ENCODE measurements at regions of chr20 and their contacts with region 1.

Region 1: DNA sequence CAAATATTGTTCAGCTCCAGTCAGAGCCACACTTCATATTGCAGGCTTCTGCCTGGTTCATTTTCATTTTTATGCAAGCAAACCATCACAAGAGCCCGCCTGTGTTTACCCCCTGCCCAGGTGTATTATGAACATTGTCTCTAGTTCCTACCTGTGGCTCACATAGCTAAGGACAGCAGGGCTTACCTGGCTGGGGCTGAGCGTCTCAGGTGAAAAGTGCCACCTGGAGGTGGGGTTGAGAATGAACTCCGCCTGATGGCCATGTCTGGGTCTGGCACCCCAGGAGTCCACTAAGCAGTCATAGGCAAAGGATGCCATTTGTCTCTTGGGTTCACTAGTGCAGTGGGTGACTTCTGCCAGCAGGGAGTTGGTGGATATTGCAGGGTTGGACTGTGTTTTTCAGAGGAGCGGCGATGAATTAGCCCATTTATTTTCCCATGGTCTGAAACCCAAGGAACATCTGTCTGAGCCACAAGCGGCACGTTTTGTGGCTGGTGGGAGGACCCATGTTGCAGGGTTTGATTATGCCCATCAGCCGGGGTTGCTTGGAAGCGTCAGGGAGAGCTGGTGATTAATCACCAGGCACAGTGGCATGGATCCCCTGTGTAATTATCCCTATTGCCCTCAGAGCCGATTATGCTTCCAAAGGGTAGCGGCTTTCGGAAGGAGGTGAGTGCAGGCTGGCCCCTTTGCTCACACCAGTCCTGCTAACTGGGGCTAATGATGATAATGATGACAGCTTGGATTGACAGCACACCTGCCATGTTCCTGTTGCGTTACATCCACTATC is 92.1 kb downstream of the CDH26 start:
- DNase-seq: peak; percentile 56
- H3K4me3 ChIP-seq: no peak overlapping the region
- H3K27ac ChIP-seq: no peak overlapping the region
- H3K4me1 ChIP-seq: peaks cover 27% of the 10 kb centered on the region
- H3K27me3 ChIP-seq: no peaks in the 10 kb centered on the region
- CTCF ChIP-seq: peak; percentile 64 to 75

Region 2: GRCh38 chr20:59948828-59949720 is 101.3 kb before region 1 on chr20:
- CTCF ChIA-PET with region 1: interaction called, 8 read pairs
- dilution Hi-C with region 1: no loop called
- in situ Hi-C with region 1: no loop called
- intact Hi-C with region 1: loop called (anchors 1 kb)
- DNase-seq: peak; percentile 37
- H3K4me3 ChIP-seq: no peak overlapping the region
- H3K27ac ChIP-seq: no peak overlapping the region
- H3K4me1 ChIP-seq: peaks cover 5% of the 10 kb centered on the region
- H3K27me3 ChIP-seq: no peaks in the 10 kb centered on the region
- CTCF ChIP-seq: peak; percentile 65 to 70

Region 3: DNA sequence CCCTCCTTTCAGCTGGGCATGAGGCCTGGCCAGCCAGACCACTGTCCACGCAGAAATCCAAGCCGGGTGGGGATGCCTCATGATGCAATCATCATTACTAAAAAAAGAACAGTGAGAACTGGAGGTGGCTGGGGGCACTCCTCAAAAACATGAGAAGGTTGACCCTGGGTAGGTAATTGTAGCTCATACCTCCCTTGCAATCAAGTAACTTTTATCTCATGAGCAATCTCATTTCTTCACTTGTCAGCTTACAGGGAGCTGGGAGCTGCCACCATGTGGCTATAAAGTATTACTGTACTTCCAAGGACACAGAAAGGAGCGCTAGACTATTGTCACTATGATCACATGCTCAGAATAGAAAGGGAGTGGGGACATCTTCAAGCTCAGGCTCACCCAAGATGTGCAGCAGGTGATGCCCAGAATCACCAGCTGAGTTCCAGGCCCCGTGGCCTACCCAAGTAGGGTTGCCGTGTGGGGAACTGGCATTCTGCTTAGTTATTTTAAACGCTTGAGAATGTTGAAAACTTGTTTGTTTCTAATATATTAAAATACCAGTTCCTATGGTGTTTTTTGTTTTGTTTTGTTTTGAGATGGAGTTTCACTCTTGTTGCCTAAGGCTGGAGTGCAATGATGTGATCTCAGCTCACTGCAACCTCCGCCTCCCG is 95.1 kb before region 1 on chr20:
- CTCF ChIA-PET with region 1: no interaction called
- dilution Hi-C with region 1: no loop called
- in situ Hi-C with region 1: loop called in 1 of 2 experiments (anchors 5 kb)
- intact Hi-C with region 1: no loop called
- DNase-seq: no peak
- H3K4me3 ChIP-seq: no peak overlapping the region
- H3K27ac ChIP-seq: no peak overlapping the region
- H3K4me1 ChIP-seq: peaks cover 4% of the 10 kb centered on the region
- H3K27me3 ChIP-seq: no peaks in the 10 kb centered on the region
- CTCF ChIP-seq: peak; percentile 30 to 42

Region 4: DNA sequence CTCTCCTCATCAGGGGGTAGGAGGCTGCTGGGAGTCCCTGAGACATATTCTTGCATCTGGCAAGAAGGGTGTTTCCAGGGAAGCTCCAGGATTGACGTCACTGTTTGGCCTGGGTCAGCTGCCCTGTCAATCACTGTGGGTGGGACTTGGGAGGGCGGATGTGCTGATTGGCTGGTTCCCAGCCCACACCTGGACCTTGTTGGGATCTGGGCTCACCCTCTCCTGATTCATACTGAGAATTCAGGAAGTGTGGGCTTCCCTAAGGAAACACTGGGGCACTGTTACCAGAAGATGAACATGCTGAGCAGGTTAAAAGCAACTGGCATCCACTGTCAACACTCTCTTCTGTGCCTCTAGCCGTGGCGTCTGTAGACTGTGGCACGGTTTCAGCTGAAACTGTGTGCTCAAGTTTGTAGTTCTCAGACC is 55.6 kb before region 1 on chr20:
- CTCF ChIA-PET with region 1: no interaction called
- dilution Hi-C with region 1: no loop called
- in situ Hi-C with region 1: no loop called
- intact Hi-C with region 1: loop called (anchors 5 kb)
- DNase-seq: peak; percentile 95
- H3K4me3 ChIP-seq: no peak overlapping the region
- H3K27ac ChIP-seq: peak overlapping the region; percentile 29
- H3K4me1 ChIP-seq: peaks cover 18% of the 10 kb centered on the region
- H3K27me3 ChIP-seq: no peaks in the 10 kb centered on the region
- CTCF ChIP-seq: no peak

Region 5: GRCh38 chr20:60009826-60010616 is 40.3 kb before region 1 on chr20:
- CTCF ChIA-PET with region 1: no interaction called
- dilution Hi-C with region 1: no loop called
- in situ Hi-C with region 1: no loop called
- intact Hi-C with region 1: no loop called
- DNase-seq: no peak
- H3K4me3 ChIP-seq: no peak overlapping the region
- H3K27ac ChIP-seq: no peak overlapping the region
- H3K4me1 ChIP-seq: peaks cover 4% of the 10 kb centered on the region
- H3K27me3 ChIP-seq: no peaks in the 10 kb centered on the region
- CTCF ChIP-seq: peak; percentile 11 to 26